Activated CD4-positive, alpha-beta T cell treated with anti-CD3 and anti-CD28 coated beads, Interleukin-2, amount 10 ng/mL, durations not matched to agents 24 days and 14 days (primary cell): ENCODE measurements at regions of chr6 and their contacts with region 1.

Region 1: DNA sequence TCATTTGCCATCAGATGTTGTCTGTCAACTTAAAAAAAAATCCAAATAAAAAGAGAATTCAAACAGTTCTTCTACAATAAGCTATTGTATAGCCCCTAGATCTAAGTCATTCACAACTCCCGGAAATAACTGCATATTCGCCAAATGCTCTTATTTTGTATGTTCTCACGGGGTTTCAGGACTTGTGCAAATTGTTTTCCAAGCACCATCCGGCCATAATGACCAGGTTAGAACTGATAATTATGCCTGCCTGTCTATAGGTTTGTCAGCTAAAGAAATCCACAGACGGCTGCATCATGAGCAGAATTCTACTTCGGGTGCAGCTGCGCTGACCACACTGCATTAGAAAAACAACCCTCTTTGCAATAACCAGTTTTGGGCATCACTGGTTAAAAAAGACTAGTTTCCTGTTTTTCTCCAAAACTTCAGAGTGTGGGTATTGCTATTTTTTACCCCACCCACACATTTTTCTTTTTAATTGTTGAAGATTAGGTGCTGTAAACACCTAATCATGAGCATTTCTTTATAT is 87.7 kb downstream of the HIVEP2 start:
- DNase-seq: peak; percentile 78
- H3K4me3 Mint-ChIP-seq: peak overlapping the region; percentile 83
- H3K27ac Mint-ChIP-seq: peak overlapping the region; percentile 97
- H3K4me1 Mint-ChIP-seq: peaks cover 81% of the 10 kb centered on the region
- H3K27me3 Mint-ChIP-seq: no peaks in the 10 kb centered on the region

Region 2: GRCh38 chr6:142902636-142903053 is 45.3 kb after region 1 on chr6:
- intact Hi-C with region 1: loop called (anchors 2 kb)
- DNase-seq: peak; percentile 93
- H3K4me3 Mint-ChIP-seq: peak overlapping the region; percentile 78
- H3K27ac Mint-ChIP-seq: peak overlapping the region; percentile 98
- H3K4me1 Mint-ChIP-seq: peaks cover 63% of the 10 kb centered on the region
- H3K27me3 Mint-ChIP-seq: no peaks in the 10 kb centered on the region